Caco-2 (cell line): ENCODE measurements at regions of chr5 and their contacts with region 1.

Region 1: DNA sequence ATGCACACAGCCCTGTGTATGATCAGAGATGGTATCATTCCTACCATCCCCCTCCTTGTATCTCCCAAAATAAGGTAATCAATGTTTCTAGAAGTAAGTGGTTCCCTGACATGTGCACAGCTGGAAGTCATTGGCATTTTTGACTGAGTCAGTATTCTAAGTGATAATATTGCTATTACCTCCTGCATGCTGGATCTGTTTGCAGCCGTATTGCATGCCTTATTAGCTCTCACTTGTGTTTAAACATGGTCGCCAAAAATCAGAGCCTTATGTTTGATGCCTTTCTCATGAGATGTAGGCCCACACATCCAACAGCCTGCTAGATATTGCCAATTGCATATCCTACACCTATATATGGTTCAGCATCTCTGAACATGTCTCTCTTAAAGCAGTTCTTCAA is 254.3 kb downstream of the CDH12 start:
- DNase-seq: no peak
- H3K4me3 ChIP-seq: no peak overlapping the region
- H3K4me3 Mint-ChIP-seq: no peak overlapping the region
- H3K27ac Mint-ChIP-seq: no peak overlapping the region
- H3K4me1 ChIP-seq: no peaks in the 10 kb centered on the region
- H3K4me1 Mint-ChIP-seq: no peaks in the 10 kb centered on the region
- H3K27me3 ChIP-seq: no peaks in the 10 kb centered on the region
- H3K27me3 Mint-ChIP-seq: no peaks in the 10 kb centered on the region
- CTCF ChIP-seq: no peak

Region 2: GRCh38 chr5:22585474-22585873 is 13.3 kb before region 1 on chr5:
- CTCF ChIA-PET with region 1: no interaction called
- POLR2A ChIA-PET with region 1: no interaction called
- intact Hi-C with region 1: no loop called
- DNase-seq: peak in 1 of 2 experiments; percentile 10
- H3K4me3 ChIP-seq: no peak overlapping the region
- H3K4me3 Mint-ChIP-seq: peak overlapping the region; percentile 13
- H3K27ac Mint-ChIP-seq: no peak overlapping the region
- H3K4me1 ChIP-seq: no peaks in the 10 kb centered on the region; the same call in 1 of the 2 replicates
- H3K4me1 Mint-ChIP-seq: peaks cover 7% of the 10 kb centered on the region
- H3K27me3 ChIP-seq: no peaks in the 10 kb centered on the region
- H3K27me3 Mint-ChIP-seq: no peaks in the 10 kb centered on the region
- CTCF ChIP-seq: no peak

Region 3: DNA sequence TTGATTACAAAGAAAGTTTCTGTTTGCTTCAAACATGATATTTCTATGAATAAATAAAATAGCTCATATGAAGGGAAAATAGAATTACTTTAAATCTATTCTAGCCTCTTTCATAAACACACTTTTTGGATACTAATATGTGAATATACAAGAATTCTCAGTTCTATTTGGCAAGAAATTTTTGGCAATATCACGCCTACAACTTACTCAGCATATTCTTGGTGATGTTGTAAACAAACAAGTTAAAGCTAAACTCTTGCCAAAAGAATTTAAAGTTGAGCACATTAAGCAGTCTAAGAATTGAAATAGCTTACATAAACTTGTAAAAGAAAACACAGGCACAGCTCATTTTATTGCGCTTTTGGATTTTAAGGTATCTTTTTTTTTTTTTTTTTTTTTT is 44.6 kb after region 1 on chr5:
- CTCF ChIA-PET with region 1: no interaction called
- POLR2A ChIA-PET with region 1: no interaction called
- intact Hi-C with region 1: loop called (anchors 1 kb)
- DNase-seq: no peak
- H3K4me3 ChIP-seq: no peak overlapping the region
- H3K4me3 Mint-ChIP-seq: no peak overlapping the region
- H3K27ac Mint-ChIP-seq: no peak overlapping the region
- H3K4me1 ChIP-seq: no peaks in the 10 kb centered on the region
- H3K4me1 Mint-ChIP-seq: no peaks in the 10 kb centered on the region
- H3K27me3 ChIP-seq: no peaks in the 10 kb centered on the region
- H3K27me3 Mint-ChIP-seq: no peaks in the 10 kb centered on the region
- CTCF ChIP-seq: no peak